ENCODE measurements at regions of chr6 and their contacts with region 1.

Region 1: GRCh38 chr6:26172496-26172958 is 85.3 kb downstream of the HFE start:
- DNase-seq: no peak
- H3K4me3 ChIP-seq: peak overlapping the region; percentile 64
- H3K27ac ChIP-seq: peak overlapping the region; percentile 93
- H3K27me3 ChIP-seq: no peaks in the 10 kb centered on the region
- CTCF ChIP-seq: no peak

Region 2: DNA sequence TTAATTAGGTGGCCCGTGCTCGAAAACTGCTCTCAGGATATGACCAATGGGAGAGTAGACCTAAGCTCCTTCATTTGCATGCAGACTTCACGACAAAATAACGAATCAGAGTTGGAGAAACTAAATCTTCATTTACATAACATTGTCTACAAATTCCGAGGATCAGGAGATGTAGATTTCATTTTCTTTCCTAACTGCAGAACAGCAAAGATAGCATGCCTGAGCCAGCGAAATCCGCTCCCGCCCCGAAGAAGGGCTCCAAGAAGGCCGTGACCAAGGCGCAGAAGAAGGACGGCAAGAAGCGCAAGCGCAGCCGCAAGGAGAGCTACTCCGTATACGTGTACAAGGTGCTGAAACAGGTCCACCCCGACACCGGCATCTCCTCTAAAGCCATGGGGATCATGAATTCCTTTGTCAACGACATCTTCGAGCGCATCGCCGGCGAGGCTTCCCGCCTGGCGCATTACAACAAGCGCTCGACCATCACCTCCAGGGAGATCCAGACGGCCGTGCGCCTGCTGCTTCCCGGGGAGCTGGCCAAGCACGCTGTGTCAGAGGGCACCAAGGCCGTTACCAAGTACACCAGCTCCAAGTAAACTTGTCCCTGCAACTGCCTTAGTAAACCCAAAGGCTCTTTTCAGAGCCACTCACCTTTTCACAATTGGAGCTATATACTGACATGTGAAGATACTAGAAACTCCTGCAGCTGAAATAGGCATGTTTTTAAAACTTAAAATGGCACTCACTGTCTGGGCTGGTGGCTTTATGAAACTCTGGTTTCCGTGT is 11.2 kb after region 1 on chr6:
- CTCF ChIA-PET with region 1: interaction called, 16 read pairs
- POLR2A ChIA-PET with region 1: interaction called, 11 read pairs
- DNase-seq: peak; percentile 72
- H3K4me3 ChIP-seq: peak overlapping the region; percentile 61
- H3K27ac ChIP-seq: peak overlapping the region; percentile 71
- H3K27me3 ChIP-seq: no peaks in the 10 kb centered on the region
- CTCF ChIP-seq: no peak

Measured in AG04450 (cell line).